ENCODE measurements at regions of chr6 and their contacts with region 1.

Region 1: DNA sequence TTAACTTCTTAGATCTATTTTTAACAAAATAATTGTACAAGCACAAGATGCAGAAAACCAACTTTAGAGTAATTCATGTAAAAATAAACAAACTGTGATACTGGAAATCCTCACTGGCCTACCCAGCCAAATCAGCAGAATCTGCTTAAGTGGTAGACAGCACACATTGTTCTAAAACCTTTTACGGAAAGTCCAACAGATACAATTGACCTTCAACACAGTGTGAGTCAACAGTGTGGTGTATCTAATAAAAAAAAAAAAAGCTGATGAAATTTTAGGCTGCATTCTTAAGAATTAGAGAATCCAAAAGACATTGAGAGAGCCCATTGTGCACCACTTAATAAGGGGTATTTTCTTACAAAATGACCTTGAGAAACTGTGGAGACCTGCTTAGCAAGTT is 174.5 kb downstream of the COL21A1 start:
- DNase-seq: no peak
- ATAC-seq: peak; percentile 69 to 90 (median 80)
- H3K4me3 ChIP-seq: no peak overlapping the region
- H3K27ac ChIP-seq: peak overlapping the region in 11 of 12 donors; percentile 6 to 77 (median 41)
- H3K4me1 ChIP-seq: peaks cover 0 to 15% (median 7%) of the 10 kb centered on the region in 12 donors
- H3K27me3 ChIP-seq: no peaks in the 10 kb centered on the region
- CTCF ChIP-seq: no peak
- POLR2A ChIP-seq: no peak

Region 2: GRCh38 chr6:56235245-56235644 is 162.4 kb after region 1 on chr6:
- intact Hi-C with region 1: loop called in 1 of 10 experiments (anchors 10 kb)
- DNase-seq: no peak
- ATAC-seq: peak in 2 of 4 donors; percentile 80 to 82
- H3K4me3 ChIP-seq: no peak overlapping the region
- H3K27ac ChIP-seq: peak overlapping the region in 2 of 12 donors; percentile 8 to 20
- H3K4me1 ChIP-seq: peaks cover 0 to 9% (median 0%) of the 10 kb centered on the region in 12 donors
- H3K27me3 ChIP-seq: no peaks in the 10 kb centered on the region
- CTCF ChIP-seq: no peak
- POLR2A ChIP-seq: no peak